ENCODE measurements at regions of chr7 and their contacts with region 1.

Region 1: GRCh38 chr7:12490117-12490688 is 80.3 kb upstream of the SCIN start:
- DNase-seq: peak; percentile 45
- H3K4me3 ChIP-seq: no peak overlapping the region
- H3K27ac ChIP-seq: no peak overlapping the region
- H3K4me1 ChIP-seq: no peaks in the 10 kb centered on the region
- CTCF ChIP-seq: peak; percentile 80

Region 2: GRCh38 chr7:12067141-12067831 is 422.9 kb before region 1 on chr7:
- CTCF ChIA-PET with region 1: no interaction called
- POLR2A ChIA-PET with region 1: no interaction called
- intact Hi-C with region 1: loop called (anchors 5 kb)
- DNase-seq: peak; percentile 23
- H3K4me3 ChIP-seq: no peak overlapping the region
- H3K27ac ChIP-seq: no peak overlapping the region
- H3K4me1 ChIP-seq: no peaks in the 10 kb centered on the region
- CTCF ChIP-seq: peak; percentile 68

Region 3: DNA sequence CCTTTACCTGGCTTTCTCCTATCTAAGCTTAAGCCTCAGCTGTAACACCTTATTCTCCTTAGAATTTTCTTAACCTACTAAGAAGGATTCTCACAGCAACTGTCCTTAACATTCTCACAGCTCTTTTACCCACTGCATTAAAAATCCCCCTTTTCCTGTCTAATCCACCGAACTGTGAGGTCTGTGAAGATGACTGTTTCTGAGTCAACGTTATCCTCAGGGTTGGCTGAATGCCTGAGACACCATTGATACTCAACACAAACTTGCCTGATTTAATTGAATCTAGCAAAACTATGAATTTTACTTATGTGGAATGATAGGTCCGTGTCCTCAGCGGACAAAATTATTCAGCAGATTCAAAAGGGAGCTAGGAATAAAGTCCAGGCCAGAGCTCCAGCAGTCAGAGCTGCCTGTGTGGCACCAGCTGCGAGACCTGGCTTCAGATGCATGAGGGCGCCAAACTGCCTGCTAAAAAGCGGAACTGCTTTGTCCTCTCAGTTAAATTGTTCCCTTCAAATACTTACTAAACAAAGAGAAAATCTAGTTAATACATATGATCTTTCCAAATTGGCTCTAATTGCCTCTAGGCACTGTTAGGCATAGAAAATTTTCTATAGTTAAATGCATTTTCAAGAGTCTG is 53.2 kb before region 1 on chr7:
- CTCF ChIA-PET with region 1: no interaction called
- POLR2A ChIA-PET with region 1: no interaction called
- intact Hi-C with region 1: loop called (anchors 10 kb)
- DNase-seq: peak; percentile 31
- H3K4me3 ChIP-seq: no peak overlapping the region
- H3K27ac ChIP-seq: no peak overlapping the region
- H3K4me1 ChIP-seq: no peaks in the 10 kb centered on the region
- CTCF ChIP-seq: peak; percentile 56; the same call in 1 of the 2 replicates

Region 4: DNA sequence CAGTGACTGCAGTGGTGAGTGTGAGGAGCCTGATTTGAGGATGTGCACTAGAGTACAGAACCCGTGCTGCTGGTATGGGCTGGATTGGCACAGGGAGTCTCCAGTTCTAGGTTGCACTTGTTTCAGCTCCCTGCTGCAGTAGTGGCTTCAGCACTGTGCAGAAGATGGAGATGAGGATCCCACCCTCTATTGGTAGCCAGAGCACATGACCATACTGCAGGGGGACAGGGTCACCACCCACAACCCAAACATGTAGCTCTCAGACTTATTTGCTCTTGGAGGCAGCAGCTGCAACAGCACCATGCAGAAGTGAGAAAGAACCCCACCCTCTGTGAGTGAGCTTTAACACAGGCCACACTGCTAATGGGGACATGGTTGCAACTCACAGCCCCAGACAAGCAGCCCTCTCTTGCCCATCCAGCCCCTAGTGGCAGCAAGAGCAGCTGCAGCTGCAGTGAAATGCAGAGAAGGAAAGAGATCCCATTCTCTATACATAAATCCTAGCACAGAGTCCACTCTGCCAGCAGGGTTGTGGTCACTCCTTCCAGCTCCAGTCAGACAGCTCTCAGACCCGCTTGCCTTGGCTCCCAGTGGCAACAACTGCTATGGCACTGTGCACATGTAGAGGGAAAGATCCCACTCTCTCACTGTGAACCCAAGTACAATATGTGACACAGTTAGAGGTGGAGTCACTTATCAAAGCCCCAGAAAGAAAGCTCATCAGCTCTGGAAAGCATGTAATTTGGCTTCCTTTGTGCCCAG is 28.9 kb after region 1 on chr7:
- CTCF ChIA-PET with region 1: no interaction called
- POLR2A ChIA-PET with region 1: no interaction called
- intact Hi-C with region 1: no loop called
- DNase-seq: no peak
- H3K4me3 ChIP-seq: no peak overlapping the region
- H3K27ac ChIP-seq: no peak overlapping the region
- H3K4me1 ChIP-seq: no peaks in the 10 kb centered on the region
- CTCF ChIP-seq: peak; percentile 67

Measured in OCI-LY7 (cell line).